Uterus (tissue), 4 donors: ENCODE measurements at regions of chr4 and their contacts with region 1.

Region 1: DNA sequence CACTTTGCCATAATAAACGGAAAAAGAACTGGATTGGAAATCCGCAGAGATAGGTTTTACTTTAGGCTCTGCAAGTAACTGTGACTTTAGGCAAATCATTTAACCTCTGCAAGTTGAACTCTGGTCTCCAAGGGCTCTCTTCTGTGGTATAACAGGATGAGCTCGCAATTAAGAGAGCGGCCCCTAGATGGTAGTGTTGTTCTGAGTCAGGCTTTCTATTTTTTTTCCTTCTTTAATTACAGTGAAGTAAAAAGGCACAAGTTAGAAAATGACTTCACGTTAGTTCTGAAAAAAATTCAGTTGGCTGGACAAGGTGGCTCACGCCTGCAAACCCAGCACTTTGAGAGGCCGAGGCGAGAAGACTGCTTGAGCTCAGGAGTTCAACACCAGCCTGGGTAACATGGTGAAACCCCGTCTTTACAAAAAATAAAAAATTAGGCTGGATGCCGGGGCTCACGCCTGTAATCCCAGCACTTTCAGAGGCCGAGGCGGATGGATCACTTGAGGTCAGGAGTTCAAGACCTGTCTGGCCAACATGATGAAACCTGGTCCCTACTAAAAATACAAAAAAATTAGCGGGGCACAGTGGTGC is 18.0 kb downstream of the RPS3A start:
- DNase-seq: peak; percentile 61 to 73
- H3K4me3 ChIP-seq: no peak overlapping the region
- H3K27ac ChIP-seq: peak overlapping the region; percentile 42 to 47
- H3K4me1 ChIP-seq: no peaks in the 10 kb centered on the region
- H3K27me3 ChIP-seq: no peaks in the 10 kb centered on the region
- CTCF ChIP-seq: peak; percentile 61 to 78 (median 76)
- POLR2A ChIP-seq: no peak

Region 2: DNA sequence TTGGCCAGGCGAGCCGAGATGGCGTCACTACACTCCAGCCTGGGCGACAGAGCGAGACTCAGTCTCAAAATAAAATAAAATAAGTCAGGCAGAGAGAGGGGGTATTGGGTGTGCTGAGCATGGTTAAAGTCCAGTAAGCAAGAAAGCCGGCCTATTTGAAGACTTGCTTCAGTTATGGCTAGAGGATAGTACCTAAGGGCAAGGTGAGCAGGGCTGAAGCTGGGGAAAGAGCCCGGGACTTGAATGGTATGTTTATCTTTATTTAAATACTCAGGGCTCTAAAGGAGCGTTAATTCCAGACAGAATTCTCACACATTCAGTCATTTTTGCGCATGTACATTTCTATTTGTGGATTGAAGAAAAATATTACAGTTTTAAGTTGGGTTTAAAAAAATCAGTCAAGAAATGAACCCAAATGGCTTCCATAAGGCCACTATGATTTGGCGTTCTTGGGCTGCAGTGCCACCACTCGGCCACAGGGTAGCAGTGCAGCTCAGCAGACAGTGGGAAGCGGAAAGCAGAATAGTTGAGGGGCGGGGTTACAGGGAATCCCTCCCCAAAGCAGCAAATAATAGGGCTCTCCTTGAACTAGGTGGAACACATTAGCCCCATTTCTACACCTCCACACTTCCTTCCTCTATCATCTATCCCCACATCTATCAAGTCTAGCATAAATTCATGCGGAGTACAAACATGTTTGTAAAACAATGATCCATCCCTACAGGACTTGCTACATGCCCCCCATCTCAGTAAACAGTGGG is 245.1 kb after region 1 on chr4:
- intact Hi-C with region 1: loop called (anchors 5 kb)
- DNase-seq: peak; percentile 83 to 84
- H3K4me3 ChIP-seq: no peak overlapping the region
- H3K27ac ChIP-seq: no peak overlapping the region
- H3K4me1 ChIP-seq: no peaks in the 10 kb centered on the region
- H3K27me3 ChIP-seq: no peaks in the 10 kb centered on the region
- CTCF ChIP-seq: peak; percentile 91 to 97 (median 94)
- POLR2A ChIP-seq: no peak